Activated CD4-positive, alpha-beta memory T cell treated with anti-CD3 and anti-CD28 coated beads for 36 hours (primary cell): ENCODE measurements at regions of chrX and their contacts with region 1.

Region 1: DNA sequence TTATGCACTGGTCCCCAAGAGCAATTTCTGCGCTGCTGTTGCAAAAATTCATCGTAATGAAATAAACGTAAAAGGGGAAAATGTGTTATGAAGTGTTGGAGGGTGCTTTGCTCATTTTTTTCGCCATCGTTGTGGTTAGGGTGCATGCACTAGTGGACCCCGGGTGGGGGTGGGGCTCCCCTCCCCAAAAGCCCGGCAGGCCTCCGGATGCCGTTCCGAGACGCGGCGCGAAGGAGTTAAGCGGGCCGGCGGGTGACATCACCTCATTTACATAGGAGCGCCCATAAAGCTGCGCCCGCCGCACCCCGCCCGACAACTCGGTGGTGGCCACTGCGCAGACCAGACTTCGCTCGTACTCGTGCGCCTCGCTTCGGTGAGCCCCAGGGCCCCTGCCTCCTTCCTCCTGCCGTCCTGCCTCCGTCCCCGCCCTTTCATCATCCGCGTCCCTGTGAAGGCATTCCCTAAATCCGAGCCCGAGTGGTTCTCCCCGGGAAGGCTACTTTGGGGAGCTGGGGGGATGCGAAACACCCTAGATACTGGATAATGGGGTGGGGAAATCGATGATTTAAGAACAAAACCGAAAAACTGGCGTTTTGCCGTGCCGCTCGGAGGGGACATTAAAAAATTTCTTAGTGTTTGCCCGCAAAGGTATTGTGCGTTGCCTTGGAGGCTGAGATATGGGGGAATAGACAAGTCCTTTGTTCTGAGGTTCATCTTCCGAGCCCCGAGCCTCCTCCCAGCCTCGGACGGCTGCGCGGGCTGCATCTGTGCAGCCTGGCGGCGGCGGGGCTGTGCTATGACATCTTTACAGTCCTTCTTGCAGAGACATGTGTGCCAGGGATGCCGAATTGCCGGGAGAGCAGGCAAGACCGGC is at the start of gene TMSB4X:
- DNase-seq: peak; percentile 89
- H3K4me3 Mint-ChIP-seq: peak within 1 kb of the TSS; percentile 94
- H3K27ac Mint-ChIP-seq: peak within 1 kb of the TSS; percentile 99
- H3K4me1 Mint-ChIP-seq: peaks cover 22% of the 10 kb centered on the region
- H3K27me3 Mint-ChIP-seq: peaks cover 3% of the 10 kb centered on the region
- total RNA-seq, gene TMSB4X: 6,087 to 6,256 TPM

Region 2: DNA sequence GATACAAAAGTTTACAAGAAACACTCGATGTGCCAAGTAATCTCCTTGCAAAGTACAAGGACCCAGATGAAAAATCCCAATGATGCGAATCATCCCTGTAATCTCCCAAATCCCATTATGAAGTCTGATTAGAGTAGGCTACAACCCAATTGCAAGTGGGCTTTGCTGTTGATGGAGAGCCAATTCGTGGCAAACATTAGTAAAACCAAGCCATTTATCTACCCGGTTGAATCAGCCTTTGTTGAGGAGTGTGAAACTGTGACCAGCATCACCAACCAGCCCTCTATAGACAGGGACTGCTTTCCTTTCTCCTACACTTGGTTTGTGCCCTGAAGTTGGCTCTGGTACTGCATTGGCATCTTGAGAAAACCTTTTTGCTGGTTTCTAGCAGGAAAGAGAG is 185.1 kb before region 1 on chrX:
- CTCF ChIA-PET with region 1: no interaction called
- POLR2A ChIA-PET with region 1: no interaction called
- intact Hi-C with region 1: no loop called
- DNase-seq: no peak
- H3K4me3 Mint-ChIP-seq: peak overlapping the region; percentile 84
- H3K27ac Mint-ChIP-seq: no peak overlapping the region
- H3K4me1 Mint-ChIP-seq: peaks cover 26% of the 10 kb centered on the region
- H3K27me3 Mint-ChIP-seq: no peaks in the 10 kb centered on the region

Region 3: DNA sequence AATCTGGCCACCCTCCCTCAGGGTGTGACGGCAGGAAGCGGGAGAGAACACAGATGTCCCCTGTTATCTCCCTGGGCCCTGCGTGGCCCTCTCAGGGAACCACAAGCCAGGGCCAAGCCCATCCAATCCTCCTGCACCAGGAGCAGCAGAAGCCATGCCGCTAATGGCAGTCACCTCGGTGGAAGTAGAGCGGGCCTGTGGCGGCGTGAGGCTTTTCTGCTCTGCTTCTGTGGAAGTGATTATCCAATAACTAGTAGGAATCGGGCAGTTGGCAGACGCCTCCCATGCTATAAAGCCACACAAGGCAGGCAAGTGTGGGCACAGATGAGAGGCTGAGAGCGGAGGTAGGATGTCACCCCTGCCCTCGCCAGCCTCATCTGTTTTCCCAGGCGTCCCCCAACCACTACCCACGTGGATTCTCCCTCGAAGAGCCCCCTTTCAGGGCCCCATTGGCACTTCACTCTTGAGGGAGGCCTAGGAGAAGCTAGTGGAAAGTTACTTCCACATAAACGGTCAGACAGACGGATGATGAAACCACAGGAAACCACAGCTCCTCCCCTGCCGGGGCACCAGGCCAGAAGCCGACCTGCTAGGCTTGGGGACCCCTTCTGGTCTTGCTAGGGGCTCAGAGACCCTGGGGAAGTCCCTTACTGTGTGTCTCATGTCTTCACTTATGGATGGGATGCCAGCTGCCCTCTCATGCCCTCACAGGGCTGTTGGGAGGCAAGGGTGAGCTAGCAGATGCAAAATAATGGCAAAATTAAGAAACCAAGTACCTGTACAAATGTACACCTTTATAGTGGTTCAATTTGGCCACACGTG is 18.9 kb before region 1 on chrX:
- CTCF ChIA-PET with region 1: interaction called, 9 read pairs
- POLR2A ChIA-PET with region 1: interaction called, 426 read pairs
- intact Hi-C with region 1: loop called (anchors 1 kb)
- DNase-seq: peak; percentile 83
- H3K4me3 Mint-ChIP-seq: peak overlapping the region; percentile 85
- H3K27ac Mint-ChIP-seq: peak overlapping the region; percentile 99
- H3K4me1 Mint-ChIP-seq: peaks cover 64% of the 10 kb centered on the region
- H3K27me3 Mint-ChIP-seq: no peaks in the 10 kb centered on the region

Region 4: GRCh38 chrX:13000301-13000811 is 25.3 kb after region 1 on chrX:
- CTCF ChIA-PET with region 1: interaction called, 5 read pairs
- POLR2A ChIA-PET with region 1: interaction called, 71 read pairs
- intact Hi-C with region 1: loop called (anchors 1 kb)
- DNase-seq: peak; percentile 59
- H3K4me3 Mint-ChIP-seq: peak overlapping the region; percentile 60
- H3K27ac Mint-ChIP-seq: peak overlapping the region; percentile 94
- H3K4me1 Mint-ChIP-seq: peaks cover 70% of the 10 kb centered on the region
- H3K27me3 Mint-ChIP-seq: no peaks in the 10 kb centered on the region

Region 5: GRCh38 chrX:13005661-13006473 is 30.8 kb after region 1 on chrX:
- CTCF ChIA-PET with region 1: no interaction called
- POLR2A ChIA-PET with region 1: interaction called, 71 read pairs
- intact Hi-C with region 1: loop called (anchors 1 kb)
- DNase-seq: peak; percentile 52
- H3K4me3 Mint-ChIP-seq: peak overlapping the region; percentile 75
- H3K27ac Mint-ChIP-seq: peak overlapping the region; percentile 99
- H3K4me1 Mint-ChIP-seq: peaks cover 68% of the 10 kb centered on the region
- H3K27me3 Mint-ChIP-seq: no peaks in the 10 kb centered on the region